Mammary epithelial cell (primary cell): ENCODE measurements at regions of chr9 and their contacts with region 1.

Region 1: GRCh38 chr9:110509792-110510191 is 69.7 kb downstream of the SVEP1 start:
- DNase-seq: no peak
- H3K4me3 ChIP-seq: no peak overlapping the region
- H3K27ac ChIP-seq: no peak overlapping the region
- H3K4me1 ChIP-seq: no peaks in the 10 kb centered on the region
- H3K27me3 ChIP-seq: no peaks in the 10 kb centered on the region
- CTCF ChIP-seq: no peak

Region 2: DNA sequence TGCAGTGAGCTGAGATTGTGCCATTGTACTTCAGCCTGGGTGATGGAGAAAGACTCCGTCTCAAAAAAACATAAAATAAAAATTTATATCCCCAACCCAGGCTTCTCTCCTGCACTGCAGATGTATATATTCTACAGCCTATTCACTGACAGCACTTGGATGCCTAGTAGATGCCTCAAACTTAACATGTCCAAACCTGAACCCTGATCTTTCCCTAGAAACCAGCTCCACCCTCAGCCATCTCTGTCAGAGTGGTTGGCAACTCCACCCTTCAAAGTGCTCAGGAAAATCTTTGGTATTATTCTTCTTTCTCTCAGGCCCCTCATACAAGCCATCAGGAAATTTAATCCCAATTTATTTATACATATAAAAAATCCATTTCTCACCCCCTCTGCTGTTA is 216.5 kb before region 1 on chr9:
- CTCF ChIA-PET with region 1: no interaction called
- dilution Hi-C with region 1: no loop called
- in situ Hi-C with region 1: no loop called
- intact Hi-C with region 1: no loop called
- DNase-seq: peak; percentile 83
- H3K4me3 ChIP-seq: no peak overlapping the region
- H3K27ac ChIP-seq: peak overlapping the region; percentile 12
- H3K4me1 ChIP-seq: peaks cover 28% of the 10 kb centered on the region
- H3K27me3 ChIP-seq: no peaks in the 10 kb centered on the region
- CTCF ChIP-seq: no peak

Region 3: DNA sequence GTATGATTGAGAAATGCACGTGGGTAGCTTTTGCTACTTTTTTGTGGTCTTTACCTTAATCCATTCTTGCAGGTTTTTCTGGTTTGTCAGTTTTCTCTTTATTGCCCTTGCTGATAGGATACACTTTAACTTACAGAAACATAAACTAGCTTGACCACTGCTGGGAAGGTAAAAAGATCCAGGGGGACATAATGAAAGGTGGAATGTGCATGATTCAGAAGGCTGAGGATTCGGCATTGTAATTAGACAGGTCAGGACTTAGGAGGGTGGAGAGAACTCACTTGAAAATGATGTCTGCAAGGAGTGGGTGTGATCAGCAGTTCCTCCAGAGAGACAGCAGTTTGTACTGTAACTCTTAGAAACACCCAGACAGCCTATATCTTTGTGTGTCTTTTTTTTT is 152.3 kb before region 1 on chr9:
- CTCF ChIA-PET with region 1: no interaction called
- dilution Hi-C with region 1: no loop called
- in situ Hi-C with region 1: no loop called
- intact Hi-C with region 1: no loop called
- DNase-seq: peak; percentile 37
- H3K4me3 ChIP-seq: no peak overlapping the region
- H3K27ac ChIP-seq: no peak overlapping the region
- H3K4me1 ChIP-seq: no peaks in the 10 kb centered on the region
- H3K27me3 ChIP-seq: no peaks in the 10 kb centered on the region
- CTCF ChIP-seq: no peak

Region 4: DNA sequence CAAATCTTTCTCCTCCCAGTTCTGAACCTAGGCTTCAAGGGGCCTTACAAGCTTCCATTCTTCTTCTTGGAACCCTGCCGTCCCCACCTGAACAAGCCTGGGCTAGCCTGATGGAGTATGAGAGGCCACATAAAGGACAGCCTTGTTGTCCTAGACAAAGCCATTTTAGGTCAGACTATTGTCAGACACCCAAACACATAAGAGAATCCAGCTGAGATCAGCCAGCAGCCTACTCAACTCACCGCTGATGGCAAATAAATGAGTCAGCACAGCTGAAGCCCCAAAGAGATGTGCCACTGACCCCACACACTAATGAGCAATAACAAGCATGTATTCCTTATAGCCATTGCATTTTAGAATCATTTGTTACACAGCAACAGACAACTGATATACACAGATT is 35.9 kb after region 1 on chr9:
- CTCF ChIA-PET with region 1: no interaction called
- dilution Hi-C with region 1: loop called (anchors 5 kb)
- in situ Hi-C with region 1: no loop called
- intact Hi-C with region 1: no loop called
- DNase-seq: peak; percentile 45
- H3K4me3 ChIP-seq: no peak overlapping the region
- H3K27ac ChIP-seq: no peak overlapping the region
- H3K4me1 ChIP-seq: peaks cover 11% of the 10 kb centered on the region
- H3K27me3 ChIP-seq: no peaks in the 10 kb centered on the region
- CTCF ChIP-seq: no peak